BJ (cell line): ENCODE measurements at regions of chr15 and their contacts with region 1.

Region 1: DNA sequence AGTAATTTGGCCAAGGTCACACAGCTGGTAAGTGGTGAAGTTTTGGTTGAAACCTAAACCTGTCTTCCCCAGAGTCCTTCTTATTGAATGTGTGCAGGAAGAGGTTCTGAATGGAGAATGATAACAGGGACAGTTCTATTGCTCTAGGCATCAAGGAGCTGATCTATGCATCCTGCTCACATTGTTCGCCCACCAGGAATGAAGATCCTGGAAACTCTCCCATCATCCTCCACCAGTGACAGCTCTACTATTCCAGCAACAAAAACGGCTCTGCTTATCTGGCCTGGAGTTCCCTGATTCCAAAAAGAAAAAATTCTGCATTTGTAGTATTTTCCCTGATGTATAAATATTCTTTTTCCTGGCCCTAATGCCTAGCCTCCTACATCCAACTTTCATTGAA is 16.4 kb upstream of the TNFAIP8L3 start:
- DNase-seq: no peak
- H3K4me3 ChIP-seq: no peak overlapping the region
- H3K27me3 ChIP-seq: no peaks in the 10 kb centered on the region
- CTCF ChIP-seq: no peak

Region 2: DNA sequence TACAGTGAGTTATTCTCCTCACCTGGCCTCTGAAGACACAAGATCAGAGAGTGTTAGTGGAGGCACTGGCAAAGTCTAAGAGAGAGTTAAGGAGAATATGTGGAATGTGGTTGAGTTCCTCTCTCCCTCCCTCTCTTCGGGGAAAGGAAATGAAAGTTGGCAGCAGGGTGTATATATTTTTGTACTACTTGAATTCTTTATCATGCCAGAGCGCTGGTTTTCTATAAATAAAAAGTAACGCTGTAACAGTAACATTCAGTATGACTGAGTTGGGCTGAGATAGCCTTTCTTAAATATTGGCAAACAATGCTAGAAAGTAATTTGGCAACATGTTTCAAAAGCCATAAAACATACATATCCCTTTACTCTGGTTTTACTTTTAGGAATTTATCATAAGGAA is 61.1 kb after region 1 on chr15:
- CTCF ChIA-PET with region 1: no interaction called
- POLR2A ChIA-PET with region 1: interaction called, 13 read pairs
- DNase-seq: no peak
- H3K4me3 ChIP-seq: no peak overlapping the region
- H3K27me3 ChIP-seq: peaks cover 1% of the 10 kb centered on the region; the same call in 1 of the 2 replicates
- CTCF ChIP-seq: no peak